Activated CD8-positive, alpha-beta T cell treated with anti-CD3 and anti-CD28 coated beads for 36 hours (primary cell): ENCODE measurements at regions of chr7 and their contacts with region 1.

Region 1: GRCh38 chr7:26193432-26194207 is 6.9 kb downstream of the HNRNPA2B1 start:
- DNase-seq: no peak
- ATAC-seq: peak; percentile 10
- H3K4me3 Mint-ChIP-seq: peak overlapping the region; percentile 100
- H3K27ac Mint-ChIP-seq: peak overlapping the region; percentile 86
- H3K4me1 Mint-ChIP-seq: peaks cover 82% of the 10 kb centered on the region
- H3K27me3 Mint-ChIP-seq: no peaks in the 10 kb centered on the region
- CTCF ChIP-seq: no peak

Region 2: GRCh38 chr7:26078437-26079336 is 114.9 kb before region 1 on chr7:
- CTCF ChIA-PET with region 1: interaction called, 15 read pairs
- POLR2A ChIA-PET with region 1: interaction called, 23 read pairs
- intact Hi-C with region 1: no loop called
- DNase-seq: peak; percentile 92
- ATAC-seq: peak; percentile 99
- H3K4me3 Mint-ChIP-seq: no peak overlapping the region
- H3K27ac Mint-ChIP-seq: no peak overlapping the region
- H3K4me1 Mint-ChIP-seq: peaks cover 6% of the 10 kb centered on the region
- H3K27me3 Mint-ChIP-seq: peaks cover 18% of the 10 kb centered on the region
- CTCF ChIP-seq: peak; percentile 75

Region 3: GRCh38 chr7:26101361-26102151 is 92.1 kb before region 1 on chr7:
- CTCF ChIA-PET with region 1: no interaction called
- POLR2A ChIA-PET with region 1: interaction called, 17 read pairs
- intact Hi-C with region 1: no loop called
- DNase-seq: peak; percentile 30
- ATAC-seq: no peak
- H3K4me3 Mint-ChIP-seq: peak overlapping the region; percentile 60
- H3K27ac Mint-ChIP-seq: peak overlapping the region; percentile 83
- H3K4me1 Mint-ChIP-seq: peaks cover 47% of the 10 kb centered on the region
- H3K27me3 Mint-ChIP-seq: no peaks in the 10 kb centered on the region
- CTCF ChIP-seq: no peak

Region 4: DNA sequence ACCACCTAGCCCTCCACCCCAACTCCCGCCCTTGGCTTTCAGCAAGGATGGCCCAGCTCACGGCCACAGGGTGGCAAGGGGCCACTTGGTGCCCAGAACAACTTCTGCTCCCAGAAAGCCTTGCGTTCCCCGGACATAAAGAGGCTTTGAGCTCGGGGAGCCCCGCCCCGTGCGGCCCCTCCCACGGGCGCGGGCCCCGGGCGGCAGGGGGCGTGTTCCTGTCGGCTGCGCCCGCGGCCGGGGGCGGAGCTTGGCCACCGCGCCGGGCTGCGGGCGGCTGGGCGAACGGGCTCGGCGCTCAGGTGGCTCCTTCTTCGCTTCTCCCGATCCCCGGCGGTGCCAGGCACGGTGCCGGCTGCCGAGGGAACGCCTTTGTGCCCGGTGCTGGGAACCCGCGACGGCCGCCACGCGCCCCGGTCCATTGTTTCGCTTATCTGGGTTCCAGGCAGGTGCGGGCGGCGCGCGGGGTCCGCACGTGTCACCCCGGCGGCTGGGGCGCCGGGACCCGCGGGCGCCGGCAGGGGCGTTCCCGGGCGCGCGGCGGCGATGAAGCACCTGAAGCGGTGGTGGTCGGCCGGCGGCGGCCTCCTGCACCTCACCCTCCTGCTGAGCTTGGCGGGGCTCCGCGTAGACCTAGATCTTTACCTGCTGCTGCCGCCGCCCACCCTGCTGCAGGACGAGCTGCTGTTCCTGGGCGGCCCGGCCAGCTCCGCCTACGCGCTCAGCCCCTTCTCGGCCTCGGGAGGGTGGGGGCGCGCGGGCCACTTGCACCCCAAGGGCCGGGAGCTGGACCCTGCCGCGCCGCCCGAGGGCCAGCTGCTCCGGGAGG is 41.5 kb before region 1 on chr7 and contains the start of gene NFE2L3:
- CTCF ChIA-PET with region 1: interaction called, 13 read pairs
- POLR2A ChIA-PET with region 1: interaction called, 359 read pairs
- intact Hi-C with region 1: no loop called
- DNase-seq: peak; percentile 88
- ATAC-seq: peak; percentile 72
- H3K4me3 Mint-ChIP-seq: peak within 1 kb of the TSS; percentile 96
- H3K27ac Mint-ChIP-seq: peak within 1 kb of the TSS; percentile 99
- H3K4me1 Mint-ChIP-seq: peaks cover 51% of the 10 kb centered on the region
- H3K27me3 Mint-ChIP-seq: no peaks in the 10 kb centered on the region
- CTCF ChIP-seq: no peak
- total RNA-seq, gene NFE2L3: 21.5 to 22.6 TPM

Region 5: DNA sequence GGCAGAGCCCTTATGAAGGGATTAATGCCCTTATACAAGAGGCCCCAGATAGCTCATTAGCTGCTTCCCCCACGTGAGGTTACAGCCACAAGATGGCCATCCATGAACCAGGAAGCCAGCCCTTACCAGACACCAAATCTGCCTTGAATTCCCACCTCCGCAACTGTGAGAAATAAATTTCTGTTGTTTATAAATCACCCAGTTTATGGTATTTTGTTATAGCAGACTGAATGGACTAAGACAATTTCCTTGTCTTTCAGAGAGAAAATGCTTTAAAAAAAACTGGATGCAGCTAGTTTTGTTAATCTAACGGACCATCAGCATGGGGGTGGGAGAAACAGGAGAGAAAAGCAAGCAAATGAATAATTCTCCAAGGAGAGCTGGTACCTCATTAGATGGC is 44.4 kb after region 1 on chr7:
- CTCF ChIA-PET with region 1: no interaction called
- POLR2A ChIA-PET with region 1: no interaction called
- intact Hi-C with region 1: no loop called
- DNase-seq: no peak
- ATAC-seq: no peak
- H3K4me3 Mint-ChIP-seq: no peak overlapping the region
- H3K27ac Mint-ChIP-seq: no peak overlapping the region
- H3K4me1 Mint-ChIP-seq: peaks cover 4% of the 10 kb centered on the region
- H3K27me3 Mint-ChIP-seq: no peaks in the 10 kb centered on the region
- CTCF ChIP-seq: no peak

Region 6: GRCh38 chr7:26409661-26410547 is 216.3 kb after region 1 on chr7:
- CTCF ChIA-PET with region 1: no interaction called
- POLR2A ChIA-PET with region 1: no interaction called
- intact Hi-C with region 1: no loop called
- DNase-seq: no peak
- ATAC-seq: no peak
- H3K4me3 Mint-ChIP-seq: no peak overlapping the region
- H3K27ac Mint-ChIP-seq: no peak overlapping the region
- H3K4me1 Mint-ChIP-seq: no peaks in the 10 kb centered on the region
- H3K27me3 Mint-ChIP-seq: peaks cover 12% of the 10 kb centered on the region
- CTCF ChIP-seq: no peak